AG04450 (cell line): ENCODE measurements at regions of chr15 and their contacts with region 1.

Region 1: GRCh38 chr15:81265944-81266775 is 57.8 kb downstream of the STARD5 start:
- DNase-seq: peak; percentile 61
- H3K4me3 ChIP-seq: no peak overlapping the region
- H3K27ac ChIP-seq: no peak overlapping the region
- H3K27me3 ChIP-seq: peaks cover 2% of the 10 kb centered on the region
- CTCF ChIP-seq: peak; percentile 95

Region 2: GRCh38 chr15:81000624-81001151 is 265.5 kb before region 1 on chr15 and contains the start of gene TLNRD1:
- CTCF ChIA-PET with region 1: interaction called, 15 read pairs
- POLR2A ChIA-PET with region 1: no interaction called
- DNase-seq: peak; percentile 73
- H3K4me3 ChIP-seq: peak within 1 kb of the TSS; percentile 83
- H3K27ac ChIP-seq: peak within 1 kb of the TSS; percentile 89
- H3K27me3 ChIP-seq: no peaks in the 10 kb centered on the region
- CTCF ChIP-seq: no peak
- polyA plus RNA-seq, gene TLNRD1: 3.5 and 4.1 TPM in 2 replicates

Region 3: DNA sequence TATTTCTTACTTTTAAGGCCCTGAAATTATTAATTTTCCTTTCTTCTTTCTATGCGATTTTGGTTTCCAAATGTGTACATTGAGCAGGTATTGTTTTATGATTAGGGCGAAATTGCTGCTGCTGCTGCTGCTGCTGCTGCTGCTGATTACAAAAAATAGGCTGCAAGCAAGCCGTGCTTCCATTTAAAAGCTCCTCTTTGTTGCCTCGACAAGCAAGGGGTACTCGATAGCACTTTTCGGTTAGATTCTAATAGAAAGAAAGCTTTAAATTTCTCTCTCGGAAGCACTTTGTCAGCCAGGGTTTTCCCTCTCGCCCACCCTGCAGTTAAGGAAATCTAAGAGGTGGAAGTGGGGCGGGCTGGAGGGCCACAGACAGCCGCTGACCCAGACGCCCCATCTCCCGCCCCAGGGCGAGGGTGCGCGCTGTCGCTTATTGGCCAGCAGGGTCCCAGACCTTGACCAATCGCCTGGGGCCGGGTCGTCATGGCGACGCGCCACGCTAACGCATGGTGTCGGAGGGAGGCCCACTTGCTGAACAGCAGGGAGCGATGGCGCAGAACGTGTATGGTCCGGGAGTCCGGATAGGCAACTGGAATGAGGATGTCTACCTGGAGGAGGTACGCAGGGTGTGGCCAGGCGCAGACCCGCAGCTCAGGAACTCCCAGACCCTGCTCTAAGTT is 132.2 kb before region 1 on chr15 and contains the start of gene CFAP161:
- CTCF ChIA-PET with region 1: interaction called, 33 read pairs
- POLR2A ChIA-PET with region 1: no interaction called
- DNase-seq: peak; percentile 33
- H3K4me3 ChIP-seq: peak within 1 kb of the TSS; percentile 60
- H3K27ac ChIP-seq: no peak within 1 kb of the TSS
- H3K27me3 ChIP-seq: peaks cover 22% of the 10 kb centered on the region
- CTCF ChIP-seq: no peak
- polyA plus RNA-seq, gene CFAP161: not detected in 2 replicates

Region 4: GRCh38 chr15:81189583-81190283 is 76.4 kb before region 1 on chr15:
- CTCF ChIA-PET with region 1: interaction called, 48 read pairs
- POLR2A ChIA-PET with region 1: interaction called, 4 read pairs
- DNase-seq: peak; percentile 99
- H3K4me3 ChIP-seq: peak overlapping the region; percentile 25; the same call in 1 of the 2 replicates
- H3K27ac ChIP-seq: peak overlapping the region; percentile 100
- H3K27me3 ChIP-seq: no peaks in the 10 kb centered on the region
- CTCF ChIP-seq: no peak

Region 5: GRCh38 chr15:81244306-81244705 is 21.9 kb before region 1 on chr15:
- CTCF ChIA-PET with region 1: interaction called, 81 read pairs
- POLR2A ChIA-PET with region 1: no interaction called
- DNase-seq: no peak
- H3K4me3 ChIP-seq: no peak overlapping the region
- H3K27ac ChIP-seq: no peak overlapping the region
- H3K27me3 ChIP-seq: no peaks in the 10 kb centered on the region
- CTCF ChIP-seq: no peak

Region 6: GRCh38 chr15:81336568-81336967 is 70.4 kb after region 1 on chr15:
- CTCF ChIA-PET with region 1: interaction called, 23 read pairs
- POLR2A ChIA-PET with region 1: no interaction called
- DNase-seq: no peak
- H3K4me3 ChIP-seq: no peak overlapping the region
- H3K27ac ChIP-seq: no peak overlapping the region
- H3K27me3 ChIP-seq: no peaks in the 10 kb centered on the region
- CTCF ChIP-seq: peak; percentile 55